Right ventricle myocardium superior (tissue), 1 donor: ENCODE measurements at regions of chr10 and their contacts with region 1.

Region 1: GRCh38 chr10:124569623-124570470 is 108.2 kb downstream of the LHPP start:
- DNase-seq: no peak
- ATAC-seq: no peak

Region 2: DNA sequence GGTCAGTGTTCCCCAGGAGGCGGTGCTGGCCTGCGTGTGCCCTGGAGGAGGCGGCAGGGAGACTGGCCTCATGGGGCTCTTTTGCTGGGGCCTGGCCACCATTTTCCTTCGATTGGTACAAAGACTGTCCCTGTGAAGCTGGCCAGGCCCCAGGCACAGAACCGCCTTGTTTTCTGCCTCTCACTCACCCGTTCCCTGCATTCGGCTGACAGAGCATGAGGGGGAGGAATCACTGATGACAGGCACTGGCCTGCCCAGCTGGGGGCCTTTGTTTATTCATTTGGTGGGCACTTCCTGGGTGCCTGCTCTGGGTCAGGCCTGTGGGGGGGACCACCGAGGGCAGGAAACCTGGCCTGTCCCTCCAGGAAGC is 35.1 kb after region 1 on chr10:
- intact Hi-C with region 1: loop called (anchors 5 kb)
- DNase-seq: peak; percentile 30
- ATAC-seq: no peak